PC-9 (cell line): ENCODE measurements at regions of chr19 and their contacts with region 1.

Region 1: DNA sequence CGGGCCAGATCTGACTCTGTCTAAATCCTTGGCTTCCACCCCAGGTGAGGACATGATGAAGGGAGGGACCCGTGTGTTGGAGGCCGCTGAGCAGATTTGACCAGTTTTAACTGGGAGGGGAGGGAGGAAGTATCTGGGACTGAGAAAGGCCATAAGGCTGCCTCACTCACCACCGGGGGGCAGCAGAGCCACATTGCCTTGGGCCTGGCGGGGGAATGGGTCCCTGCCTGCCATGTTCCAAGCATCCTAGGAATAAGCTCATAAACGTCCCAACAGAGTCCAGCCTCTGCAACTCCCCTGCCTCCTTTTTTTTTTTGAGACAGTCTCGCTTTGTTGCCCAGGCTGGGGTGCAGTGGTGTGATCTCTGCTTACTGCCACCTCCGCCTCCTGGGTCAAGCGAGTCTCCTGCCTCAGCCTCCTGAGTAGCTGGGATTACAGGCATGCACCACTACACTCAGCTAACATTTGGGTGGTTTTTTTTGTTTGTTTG is 15.5 kb downstream of the MAST3 start:
- DNase-seq: peak; percentile 63 to 82
- H3K4me3 ChIP-seq: no peak overlapping the region
- H3K27ac ChIP-seq: no peak overlapping the region
- H3K4me1 ChIP-seq: peaks cover 17% of the 10 kb centered on the region
- H3K27me3 ChIP-seq: no peaks in the 10 kb centered on the region
- CTCF ChIP-seq: peak; percentile 89

Region 2: GRCh38 chr19:18152444-18152816 is 39.4 kb after region 1 on chr19:
- CTCF ChIA-PET with region 1: interaction called, 3 read pairs
- POLR2A ChIA-PET with region 1: no interaction called
- intact Hi-C with region 1: loop called (anchors 2 kb)
- DNase-seq: peak; percentile 92 to 93
- H3K4me3 ChIP-seq: peak overlapping the region; percentile 73
- H3K27ac ChIP-seq: peak overlapping the region; percentile 91
- H3K4me1 ChIP-seq: peaks cover 15% of the 10 kb centered on the region
- H3K27me3 ChIP-seq: no peaks in the 10 kb centered on the region
- CTCF ChIP-seq: peak; percentile 82

Region 3: DNA sequence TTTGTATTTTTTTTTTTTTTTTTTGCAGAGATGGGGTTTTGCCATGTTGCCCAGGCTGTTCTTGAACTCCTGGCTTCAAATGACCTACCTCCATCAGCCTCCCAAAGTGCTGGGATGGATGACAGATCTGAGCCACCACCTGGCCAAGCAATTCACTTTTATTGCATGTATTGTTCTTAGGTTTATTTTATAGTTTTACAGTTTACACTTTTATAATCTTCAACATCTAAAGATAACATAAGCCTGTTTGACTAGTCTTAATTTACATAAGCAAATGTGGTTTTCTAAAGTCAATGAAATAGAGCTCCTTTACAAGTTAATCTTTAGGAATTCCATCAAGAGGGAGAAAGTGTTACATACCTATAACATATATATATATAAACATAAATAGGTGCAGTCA is 70.5 kb after region 1 on chr19:
- CTCF ChIA-PET with region 1: no interaction called
- POLR2A ChIA-PET with region 1: no interaction called
- intact Hi-C with region 1: no loop called
- DNase-seq: peak in 1 of 2 experiments; percentile 50
- H3K4me3 ChIP-seq: no peak overlapping the region
- H3K27ac ChIP-seq: no peak overlapping the region
- H3K4me1 ChIP-seq: no peaks in the 10 kb centered on the region
- H3K27me3 ChIP-seq: no peaks in the 10 kb centered on the region
- CTCF ChIP-seq: no peak

Region 4: GRCh38 chr19:18251587-18252369 is 138.7 kb after region 1 on chr19:
- CTCF ChIA-PET with region 1: interaction called, 10 read pairs
- POLR2A ChIA-PET with region 1: no interaction called
- intact Hi-C with region 1: loop called (anchors 2 kb)
- DNase-seq: peak; percentile 64 to 70
- H3K4me3 ChIP-seq: no peak overlapping the region
- H3K27ac ChIP-seq: no peak overlapping the region
- H3K4me1 ChIP-seq: peaks cover 39% of the 10 kb centered on the region
- H3K27me3 ChIP-seq: no peaks in the 10 kb centered on the region
- CTCF ChIP-seq: peak; percentile 100